ENCODE measurements at regions of chr4 and their contacts with region 1.

Region 1: DNA sequence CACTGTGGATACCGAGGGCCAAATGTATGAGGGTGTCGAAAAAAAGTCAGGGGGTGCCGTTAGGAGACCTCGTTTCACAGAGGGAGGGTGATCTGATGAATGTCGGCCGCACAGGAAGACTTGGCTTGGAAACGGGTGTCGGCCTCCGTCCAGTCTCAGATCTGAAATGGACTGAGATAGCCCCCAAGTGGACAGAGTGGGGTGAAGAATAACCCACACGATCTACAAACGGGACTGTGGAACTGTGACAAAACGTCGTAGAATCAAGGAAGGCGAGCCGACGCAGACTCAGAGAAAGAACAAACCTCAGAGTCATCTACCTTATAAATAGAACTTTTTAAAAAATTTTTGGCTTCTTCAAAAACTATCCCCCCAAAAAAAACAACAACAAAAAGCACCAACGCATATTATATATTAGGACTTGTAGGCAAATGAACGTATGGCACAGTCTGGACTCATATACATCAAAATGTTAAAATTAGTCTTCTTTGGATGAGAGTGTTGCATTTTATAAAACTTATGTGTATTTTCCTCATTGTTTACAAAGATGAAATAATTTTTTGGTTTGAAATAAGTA is 63.8 kb upstream of the IRF2 start:
- DNase-seq: peak; percentile 80 to 94 (median 84)
- ATAC-seq: peak; percentile 93
- H3K4me3 ChIP-seq: peak overlapping the region; percentile 66
- H3K27ac ChIP-seq: peak overlapping the region; percentile 88
- H3K4me1 ChIP-seq: peaks cover 4 to 21% of the 10 kb centered on the region in 2 experiments
- H3K27me3 ChIP-seq: no peaks in the 10 kb centered on the region
- CTCF ChIP-seq: peak; percentile 85 to 93 (median 86)
- EP300 ChIP-seq: no peak
- POLR2A ChIP-seq: no peak
- RAD21 ChIP-seq: peak; percentile 91 to 95

Region 2: DNA sequence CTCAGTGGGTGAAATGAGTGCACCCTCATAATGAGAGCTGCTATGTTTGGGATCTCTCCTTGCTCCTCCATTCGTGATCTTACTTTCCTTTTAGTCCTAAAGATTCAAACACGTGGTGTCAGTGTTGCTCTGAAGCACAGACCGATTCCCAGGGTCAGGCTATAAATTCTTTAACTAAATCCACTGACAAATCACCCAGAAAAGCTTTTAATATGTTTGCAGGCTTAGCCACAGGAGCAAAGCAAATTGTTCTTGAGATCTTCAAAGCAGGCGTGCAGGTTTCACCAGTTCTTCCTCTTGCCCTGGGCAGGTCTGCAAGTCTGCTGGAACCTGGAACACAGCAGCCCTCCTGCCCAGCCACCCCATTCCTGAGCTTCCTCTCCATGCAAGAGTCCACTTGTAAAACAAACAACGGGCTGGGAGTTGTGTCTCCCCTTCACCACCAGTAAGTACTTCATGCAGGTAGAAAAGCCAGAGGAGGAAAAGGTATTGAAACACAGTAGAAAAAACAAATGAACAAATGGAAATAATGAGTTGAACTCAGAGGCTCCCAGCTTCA is 250.3 kb before region 1 on chr4:
- CTCF ChIA-PET with region 1: no interaction called
- POLR2A ChIA-PET with region 1: interaction called, 4 read pairs
- in situ Hi-C with region 1: no loop called
- intact Hi-C with region 1: loop called (anchors 1 kb)
- DNase-seq: no peak
- ATAC-seq: peak; percentile 74
- H3K4me3 ChIP-seq: no peak overlapping the region
- H3K27ac ChIP-seq: no peak overlapping the region
- H3K4me1 ChIP-seq: peaks cover 0 to 5% of the 10 kb centered on the region in 2 experiments; a peak in 3 of 5 replicates
- H3K27me3 ChIP-seq: no peaks in the 10 kb centered on the region
- CTCF ChIP-seq: peak in 2 of 3 experiments; percentile 9 to 45; a peak in 3 of 6 replicates
- EP300 ChIP-seq: no peak
- POLR2A ChIP-seq: no peak
- RAD21 ChIP-seq: peak; percentile 54 to 56

Region 3: GRCh38 chr4:184384056-184384809 is 153.9 kb before region 1 on chr4:
- CTCF ChIA-PET with region 1: no interaction called
- POLR2A ChIA-PET with region 1: no interaction called
- in situ Hi-C with region 1: no loop called
- intact Hi-C with region 1: loop called (anchors 5 kb)
- DNase-seq: no peak
- ATAC-seq: no peak
- H3K4me3 ChIP-seq: no peak overlapping the region
- H3K27ac ChIP-seq: no peak overlapping the region
- H3K4me1 ChIP-seq: peaks cover 30 to 54% of the 10 kb centered on the region in 2 experiments
- H3K27me3 ChIP-seq: no peaks in the 10 kb centered on the region
- CTCF ChIP-seq: no peak
- EP300 ChIP-seq: no peak
- POLR2A ChIP-seq: no peak
- RAD21 ChIP-seq: no peak

Region 4: GRCh38 chr4:184474263-184475095 is 63.6 kb before region 1 on chr4 and contains the start of gene IRF2:
- CTCF ChIA-PET with region 1: no interaction called
- POLR2A ChIA-PET with region 1: interaction called, 4 read pairs
- in situ Hi-C with region 1: no loop called
- intact Hi-C with region 1: loop called (anchors 1 kb)
- DNase-seq: peak; percentile 94 to 97 (median 96)
- ATAC-seq: peak; percentile 87
- H3K4me3 ChIP-seq: peak within 1 kb of the TSS; percentile 92
- H3K27ac ChIP-seq: peak within 1 kb of the TSS; percentile 93
- H3K4me1 ChIP-seq: peaks cover 21 to 23% of the 10 kb centered on the region in 2 experiments
- H3K27me3 ChIP-seq: no peaks in the 10 kb centered on the region
- CTCF ChIP-seq: peak in 2 of 3 experiments; percentile 5 to 8; a peak in 1 of 6 replicates
- EP300 ChIP-seq: peak; percentile 50
- POLR2A ChIP-seq: peak; percentile 91
- RAD21 ChIP-seq: no peak
- polyA plus RNA-seq, gene IRF2: 8.8 to 17.1 TPM

Region 5: GRCh38 chr4:186449954-186450353 is 1911.8 kb after region 1 on chr4:
- CTCF ChIA-PET with region 1: no interaction called
- POLR2A ChIA-PET with region 1: no interaction called
- in situ Hi-C with region 1: no loop called
- intact Hi-C with region 1: no loop called
- DNase-seq: no peak
- ATAC-seq: no peak
- H3K4me3 ChIP-seq: no peak overlapping the region
- H3K27ac ChIP-seq: no peak overlapping the region
- H3K4me1 ChIP-seq: no peaks in the 10 kb centered on the region
- H3K27me3 ChIP-seq: no peaks in the 10 kb centered on the region
- CTCF ChIP-seq: no peak
- EP300 ChIP-seq: no peak
- POLR2A ChIP-seq: no peak
- RAD21 ChIP-seq: no peak